ENCODE measurements at regions of chr3 and their contacts with region 1.

Region 1: DNA sequence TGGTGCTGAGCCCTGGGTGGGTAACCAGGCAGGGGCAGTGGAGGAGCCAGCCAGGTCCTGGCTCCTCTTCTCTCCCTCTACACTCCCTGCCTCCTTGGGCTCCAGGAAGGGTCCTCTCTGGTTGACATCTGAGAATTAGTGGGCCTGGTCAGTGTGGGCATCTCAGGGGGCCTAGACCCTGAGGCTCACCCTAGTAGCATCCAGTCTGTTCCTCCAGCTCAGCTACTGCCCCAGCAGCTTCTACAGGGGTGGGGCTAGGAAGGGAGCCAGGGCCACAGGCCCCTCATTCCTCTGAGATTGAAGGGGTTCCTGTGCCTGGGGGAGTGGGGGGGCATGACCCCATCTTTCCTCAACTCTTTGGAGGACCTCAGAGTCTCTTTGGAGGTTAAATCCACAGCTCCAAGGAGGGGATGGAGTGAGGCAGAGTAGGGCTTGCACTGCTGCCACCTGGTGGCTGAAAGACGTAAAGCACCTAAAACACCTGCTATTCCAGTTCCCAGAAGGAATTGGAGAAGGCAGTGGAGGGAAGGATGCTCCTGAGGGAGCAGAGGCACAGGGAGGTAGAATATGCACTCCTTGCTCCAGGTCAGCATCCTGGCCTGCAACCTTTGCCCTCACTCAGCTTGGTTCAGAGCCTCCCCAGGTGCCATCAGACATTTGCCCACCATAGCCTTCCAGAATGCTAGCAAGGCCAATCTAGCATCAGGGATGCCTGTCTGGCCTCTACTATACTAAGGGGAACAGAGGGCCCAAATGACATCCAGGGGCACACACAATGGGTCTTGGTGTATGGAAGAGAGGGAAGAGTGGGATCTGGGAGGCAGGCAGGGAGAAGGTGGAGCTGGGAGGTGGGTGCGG is 25.1 kb downstream of the C3orf18 start:
- DNase-seq: peak; percentile 73
- ATAC-seq: peak; percentile 71
- H3K4me3 ChIP-seq: no peak overlapping the region
- H3K4me3 Mint-ChIP-seq: no peak overlapping the region
- H3K27ac ChIP-seq: no peak overlapping the region
- H3K27ac Mint-ChIP-seq: no peak overlapping the region
- H3K4me1 ChIP-seq: no peaks in the 10 kb centered on the region
- H3K4me1 Mint-ChIP-seq: no peaks in the 10 kb centered on the region
- H3K27me3 ChIP-seq: peaks cover 0 to 16% (median 0%) of the 10 kb centered on the region in 4 experiments
- H3K27me3 Mint-ChIP-seq: peaks cover 18% of the 10 kb centered on the region
- CTCF ChIP-seq: peak; percentile 97

Region 2: DNA sequence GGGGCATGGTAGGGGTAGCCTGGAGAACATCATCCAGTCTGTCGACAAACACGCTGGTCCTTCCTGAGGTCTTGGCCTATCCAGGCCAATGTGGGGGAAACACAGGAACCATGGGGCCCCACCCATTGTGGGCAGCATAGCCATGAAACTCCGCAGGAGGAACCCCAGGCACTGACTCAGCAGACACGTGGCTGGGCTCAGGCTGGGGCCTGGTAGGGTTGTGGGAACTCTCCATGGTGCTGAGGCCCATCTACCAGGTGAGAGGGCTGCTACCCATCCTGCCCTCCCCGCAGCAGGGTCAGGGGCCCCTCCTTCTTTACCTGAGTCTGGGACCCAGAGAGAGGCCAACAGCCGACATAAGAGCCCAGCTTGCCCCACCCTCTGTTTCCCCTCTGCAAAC is 16.4 kb before region 1 on chr3:
- CTCF ChIA-PET with region 1: interaction called, 24 read pairs
- POLR2A ChIA-PET with region 1: no interaction called
- intact Hi-C with region 1: no loop called
- DNase-seq: no peak
- ATAC-seq: peak; percentile 39
- H3K4me3 ChIP-seq: no peak overlapping the region
- H3K4me3 Mint-ChIP-seq: no peak overlapping the region
- H3K27ac ChIP-seq: no peak overlapping the region
- H3K27ac Mint-ChIP-seq: no peak overlapping the region
- H3K4me1 ChIP-seq: no peaks in the 10 kb centered on the region
- H3K4me1 Mint-ChIP-seq: no peaks in the 10 kb centered on the region
- H3K27me3 ChIP-seq: peaks cover 0 to 18% (median 5%) of the 10 kb centered on the region in 4 experiments
- H3K27me3 Mint-ChIP-seq: peaks cover 21% of the 10 kb centered on the region
- CTCF ChIP-seq: no peak

Region 3: GRCh38 chr3:50862221-50862620 is 319.8 kb after region 1 on chr3:
- CTCF ChIA-PET with region 1: no interaction called
- POLR2A ChIA-PET with region 1: no interaction called
- intact Hi-C with region 1: no loop called
- DNase-seq: no peak
- ATAC-seq: no peak
- H3K4me3 ChIP-seq: no peak overlapping the region
- H3K4me3 Mint-ChIP-seq: no peak overlapping the region
- H3K27ac ChIP-seq: no peak overlapping the region
- H3K27ac Mint-ChIP-seq: no peak overlapping the region
- H3K4me1 ChIP-seq: no peaks in the 10 kb centered on the region
- H3K4me1 Mint-ChIP-seq: no peaks in the 10 kb centered on the region
- H3K27me3 ChIP-seq: no peaks in the 10 kb centered on the region
- H3K27me3 Mint-ChIP-seq: peaks cover 28% of the 10 kb centered on the region
- CTCF ChIP-seq: no peak

Measured in B cell (primary cell).